H1 (cell line): ENCODE measurements at regions of chr1 and their contacts with region 1.

Region 1: DNA sequence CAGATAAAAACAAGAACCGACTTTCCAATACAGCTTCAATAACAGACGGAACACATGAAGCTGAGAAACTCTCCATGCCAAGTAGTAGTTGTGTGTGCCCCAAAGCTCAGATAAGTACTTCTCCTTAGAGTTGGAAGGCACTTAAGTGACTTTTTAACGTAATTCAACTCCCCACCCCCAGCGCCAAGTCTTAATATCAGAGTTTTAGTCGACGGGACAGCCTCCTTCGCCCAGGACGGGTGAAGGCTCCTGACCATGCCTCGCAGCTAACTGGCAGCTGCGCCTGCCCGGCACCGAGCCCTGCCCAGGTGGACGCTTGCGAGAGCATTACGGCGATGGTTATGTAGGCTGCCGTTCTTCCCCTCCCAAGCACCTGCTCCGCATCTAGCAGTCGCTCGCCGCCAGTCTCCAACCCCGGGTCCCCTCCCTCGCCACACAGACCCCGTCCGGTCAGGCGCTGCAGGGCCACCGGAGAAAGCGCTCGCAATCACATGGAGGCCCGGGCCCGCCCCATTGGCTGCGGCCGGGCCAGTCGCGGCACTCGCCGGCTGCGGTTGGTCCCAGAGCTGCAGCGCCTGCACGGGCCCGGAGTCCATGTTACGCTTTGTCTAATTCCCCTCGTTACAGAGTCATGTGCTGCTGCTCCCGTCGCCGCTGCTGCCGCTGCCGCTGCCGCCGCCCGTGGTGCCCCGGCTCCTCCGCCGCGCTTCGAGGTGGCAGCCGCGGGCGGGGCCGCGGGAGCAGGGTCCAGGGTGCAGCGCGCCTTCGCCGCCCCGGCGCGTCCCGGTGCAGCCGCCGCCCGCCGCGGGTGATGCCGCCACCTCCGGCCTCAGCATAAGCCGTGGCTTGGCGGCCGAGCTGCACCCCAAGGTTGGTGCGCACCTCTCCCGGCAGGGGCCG is at the start of gene LRRC8D:
- DNase-seq: peak in 1 of 2 experiments; percentile 90
- H3K4me3 ChIP-seq: peak within 1 kb of the TSS; percentile 72 to 89 (median 78)
- H3K27ac ChIP-seq: peak within 1 kb of the TSS; percentile 81
- H3K4me1 ChIP-seq: peaks cover 0 to 5% (median 3%) of the 10 kb centered on the region in 4 experiments; a peak in 6 of 7 replicates
- H3K27me3 ChIP-seq: peaks cover 0 to 5% (median 2%) of the 10 kb centered on the region in 4 experiments; a peak in 4 of 7 replicates
- CTCF ChIP-seq: no peak
- EP300 ChIP-seq: no peak
- POLR2A ChIP-seq: peak; percentile 33 to 58; a peak in 2 of 3 replicates
- RAD21 ChIP-seq: 0 out of 4 replicates have a peak, but pooled peaks of 1 of the 2 experiments have one; percentile 12
- total RNA-seq, gene LRRC8D: 58.5 and 58.9 TPM in 2 replicates

Region 2: DNA sequence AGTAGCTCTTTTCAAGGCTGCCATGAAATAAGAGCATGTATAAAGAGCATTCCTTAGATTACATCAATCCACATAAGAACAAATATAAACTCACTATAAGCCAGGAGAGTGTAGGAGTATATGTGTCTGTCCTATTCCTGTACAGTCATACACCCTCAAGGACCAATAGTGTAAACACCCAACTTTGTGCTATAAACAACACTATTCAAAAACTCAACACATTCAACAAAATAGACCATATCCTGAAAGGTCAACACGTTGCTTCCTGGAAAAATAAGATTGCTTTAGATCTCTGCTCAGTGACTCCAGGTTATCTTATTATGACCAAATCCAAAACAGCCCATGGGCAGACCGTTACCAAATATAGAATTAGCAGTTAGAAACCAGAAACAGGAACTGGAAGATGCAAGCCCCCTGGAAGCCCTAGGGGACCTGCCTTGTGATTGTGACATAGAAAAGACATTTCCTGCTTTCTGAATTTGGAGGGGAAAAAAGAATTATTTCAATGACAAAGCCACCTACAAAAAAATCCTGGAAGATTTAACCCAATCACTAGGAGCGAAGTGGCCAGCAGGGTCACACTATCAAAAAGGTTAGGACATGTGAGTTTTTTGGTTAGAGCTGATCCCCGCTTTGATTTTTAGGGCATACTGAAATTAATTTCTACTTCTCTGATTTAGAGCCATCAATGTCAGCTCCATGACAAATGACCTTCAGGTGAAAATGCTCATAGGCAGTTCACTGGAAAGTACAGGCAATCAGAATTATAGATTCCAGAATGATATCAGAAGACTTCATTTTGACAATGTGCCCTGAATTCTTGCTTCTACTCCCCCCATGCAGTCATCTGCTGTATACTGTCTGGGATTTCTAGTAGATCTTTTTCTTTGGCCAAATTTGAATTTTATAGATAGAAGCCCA is 127.8 kb before region 1 on chr1:
- CTCF ChIA-PET with region 1: no interaction called
- POLR2A ChIA-PET with region 1: no interaction called
- DNase-seq: no peak
- H3K4me3 ChIP-seq: no peak overlapping the region
- H3K27ac ChIP-seq: no peak overlapping the region
- H3K4me1 ChIP-seq: no peaks in the 10 kb centered on the region
- H3K27me3 ChIP-seq: no peaks in the 10 kb centered on the region
- CTCF ChIP-seq: no peak
- EP300 ChIP-seq: no peak
- POLR2A ChIP-seq: no peak
- RAD21 ChIP-seq: no peak

Region 3: GRCh38 chr1:89794406-89794805 is 26.3 kb before region 1 on chr1:
- CTCF ChIA-PET with region 1: no interaction called
- POLR2A ChIA-PET with region 1: interaction called, 11 read pairs
- DNase-seq: no peak
- H3K4me3 ChIP-seq: no peak overlapping the region
- H3K27ac ChIP-seq: no peak overlapping the region
- H3K4me1 ChIP-seq: no peaks in the 10 kb centered on the region
- H3K27me3 ChIP-seq: no peaks in the 10 kb centered on the region
- CTCF ChIP-seq: no peak
- EP300 ChIP-seq: no peak
- POLR2A ChIP-seq: no peak
- RAD21 ChIP-seq: no peak

Region 4: GRCh38 chr1:89804642-89805237 is 15.9 kb before region 1 on chr1:
- CTCF ChIA-PET with region 1: interaction called, 10 read pairs
- POLR2A ChIA-PET with region 1: interaction called, 51 read pairs
- DNase-seq: peak in 1 of 2 experiments; percentile 96
- H3K4me3 ChIP-seq: no peak overlapping the region
- H3K27ac ChIP-seq: no peak overlapping the region
- H3K4me1 ChIP-seq: peaks cover 6 to 22% (median 10%) of the 10 kb centered on the region in 4 experiments; a peak in 5 of 7 replicates
- H3K27me3 ChIP-seq: no peaks in the 10 kb centered on the region; a peak in 4 of 7 replicates
- CTCF ChIP-seq: peak; percentile 69 to 93 (median 88)
- EP300 ChIP-seq: no peak
- POLR2A ChIP-seq: no peak
- RAD21 ChIP-seq: peak; percentile 98

Region 5: GRCh38 chr1:89833183-89834082 is 12.8 kb after region 1 on chr1:
- CTCF ChIA-PET with region 1: interaction called, 23 read pairs
- POLR2A ChIA-PET with region 1: interaction called, 87 read pairs
- DNase-seq: no peak
- H3K4me3 ChIP-seq: no peak overlapping the region
- H3K27ac ChIP-seq: no peak overlapping the region
- H3K4me1 ChIP-seq: peaks cover 12 to 30% (median 20%) of the 10 kb centered on the region in 4 experiments
- H3K27me3 ChIP-seq: no peaks in the 10 kb centered on the region
- CTCF ChIP-seq: no peak
- EP300 ChIP-seq: no peak
- POLR2A ChIP-seq: no peak
- RAD21 ChIP-seq: no peak

Region 6: GRCh38 chr1:89843281-89844121 is 22.8 kb after region 1 on chr1:
- CTCF ChIA-PET with region 1: interaction called, 11 read pairs
- POLR2A ChIA-PET with region 1: interaction called, 30 read pairs
- DNase-seq: peak in 1 of 2 experiments; percentile 79
- H3K4me3 ChIP-seq: peak overlapping the region; percentile 46 to 74 (median 64)
- H3K27ac ChIP-seq: peak overlapping the region; percentile 72; the same call in 1 of the 2 replicates
- H3K4me1 ChIP-seq: peaks cover 2 to 15% (median 11%) of the 10 kb centered on the region in 4 experiments; a peak in 6 of 7 replicates
- H3K27me3 ChIP-seq: no peaks in the 10 kb centered on the region
- CTCF ChIP-seq: peak; percentile 51 to 69 (median 54); a peak in 3 of 4 replicates
- EP300 ChIP-seq: no peak
- POLR2A ChIP-seq: peak in 1 of 2 experiments; percentile 58; a peak in 2 of 3 replicates
- RAD21 ChIP-seq: peak; percentile 26 to 60; a peak in 3 of 4 replicates

Region 7: GRCh38 chr1:89923517-89923916 is 102.8 kb after region 1 on chr1:
- CTCF ChIA-PET with region 1: no interaction called
- POLR2A ChIA-PET with region 1: no interaction called
- DNase-seq: no peak
- H3K4me3 ChIP-seq: no peak overlapping the region
- H3K27ac ChIP-seq: no peak overlapping the region
- H3K4me1 ChIP-seq: peaks cover 0 to 10% (median 1%) of the 10 kb centered on the region in 4 experiments; a peak in 3 of 7 replicates
- H3K27me3 ChIP-seq: no peaks in the 10 kb centered on the region
- CTCF ChIP-seq: no peak
- EP300 ChIP-seq: no peak
- POLR2A ChIP-seq: no peak
- RAD21 ChIP-seq: no peak

Region 8: GRCh38 chr1:89994805-89995597 is 174.3 kb after region 1 on chr1 and contains the start of gene ZNF326:
- CTCF ChIA-PET with region 1: interaction called, 4 read pairs
- POLR2A ChIA-PET with region 1: interaction called, 14 read pairs
- DNase-seq: peak; percentile 89 to 99
- H3K4me3 ChIP-seq: peak within 1 kb of the TSS; percentile 71 to 98 (median 95)
- H3K27ac ChIP-seq: peak within 1 kb of the TSS; percentile 99
- H3K4me1 ChIP-seq: peaks cover 0 to 3% (median 1%) of the 10 kb centered on the region in 4 experiments; a peak in 3 of 7 replicates
- H3K27me3 ChIP-seq: no peaks in the 10 kb centered on the region
- CTCF ChIP-seq: 0 out of 4 replicates have a peak, but pooled peaks of 1 of the 3 experiments have one; percentile 4
- EP300 ChIP-seq: 0 out of 3 replicates have a peak, but pooled peaks of 1 of the 2 experiments have one; percentile 23
- POLR2A ChIP-seq: peak; percentile 97 to 98
- RAD21 ChIP-seq: no peak
- total RNA-seq, gene ZNF326: 30.6 and 31.8 TPM in 2 replicates